B cell (primary cell): ENCODE measurements at regions of chr22 and their contacts with region 1.

Region 1: DNA sequence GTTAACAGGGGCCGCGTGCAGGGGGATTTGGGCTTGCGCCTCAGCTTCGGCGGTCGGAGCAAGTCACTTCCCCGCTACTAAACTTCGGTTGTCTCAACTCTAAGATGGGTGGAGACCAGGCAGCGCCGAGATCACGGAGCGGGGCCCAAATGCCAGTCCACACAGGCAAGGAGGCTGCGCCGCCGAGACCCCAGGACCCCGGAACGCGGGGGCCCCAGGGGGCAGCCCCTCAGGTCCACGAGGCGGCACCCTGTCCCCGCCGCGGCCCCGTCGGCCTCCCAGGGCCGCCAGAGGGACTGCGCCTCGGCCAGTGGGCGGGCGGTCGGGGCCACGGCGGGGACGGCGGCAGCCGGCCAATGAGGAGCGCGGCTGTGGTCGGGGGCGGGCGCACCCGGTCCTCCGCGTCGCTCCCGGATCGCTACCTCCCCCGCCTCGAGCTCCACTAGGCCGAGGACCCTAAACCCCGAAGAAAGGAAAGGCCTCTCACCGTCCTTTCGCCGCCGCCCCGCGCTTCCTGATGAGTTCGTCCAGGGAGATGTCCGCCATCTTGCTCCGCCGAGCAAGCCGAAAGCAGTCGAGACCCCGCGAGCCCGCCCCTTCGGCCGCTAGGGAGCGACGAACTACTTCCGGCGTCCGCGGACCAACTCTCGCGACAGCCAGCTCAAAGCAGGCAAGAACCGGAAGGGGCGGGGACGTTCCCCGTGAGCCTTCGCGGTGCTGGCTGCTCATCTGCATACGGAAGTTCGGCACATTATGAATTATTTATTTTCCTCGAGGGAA is at the start of gene POLDIP3:
- DNase-seq: peak; percentile 99
- ATAC-seq: peak; percentile 68
- H3K4me3 ChIP-seq: peak within 1 kb of the TSS; percentile 59 to 91 (median 74)
- H3K4me3 Mint-ChIP-seq: peak within 1 kb of the TSS; percentile 94
- H3K27ac ChIP-seq: peak within 1 kb of the TSS; percentile 98 to 100
- H3K27ac Mint-ChIP-seq: peak within 1 kb of the TSS; percentile 100
- H3K4me1 ChIP-seq: peaks cover 21 to 46% of the 10 kb centered on the region in 2 donors
- H3K4me1 Mint-ChIP-seq: peaks cover 56% of the 10 kb centered on the region
- H3K27me3 ChIP-seq: no peaks in the 10 kb centered on the region
- H3K27me3 Mint-ChIP-seq: no peaks in the 10 kb centered on the region
- CTCF ChIP-seq: no peak
- total RNA-seq, gene POLDIP3: 84.0 and 86.5 TPM in 2 replicates

Region 2: DNA sequence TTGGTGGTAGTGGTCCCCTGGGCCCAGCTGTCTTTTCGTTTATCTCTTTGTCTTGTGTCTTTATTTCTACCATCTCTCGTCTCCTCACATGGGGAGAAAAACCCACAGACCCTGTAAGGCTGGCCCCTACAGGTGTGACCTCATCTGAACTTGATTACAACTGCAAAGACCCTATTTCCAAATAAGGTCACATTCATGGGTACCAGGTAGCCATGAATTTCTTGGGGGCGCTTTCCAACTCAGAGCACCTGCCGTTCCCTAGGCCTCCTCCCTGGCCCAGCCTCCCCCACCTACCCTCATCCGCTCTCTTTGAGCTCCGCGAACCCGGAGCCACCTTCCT is 80.9 kb before region 1 on chr22:
- CTCF ChIA-PET with region 1: interaction called, 8 read pairs
- POLR2A ChIA-PET with region 1: interaction called, 10 read pairs
- intact Hi-C with region 1: loop called (anchors 1 kb)
- DNase-seq: no peak
- ATAC-seq: no peak
- H3K4me3 ChIP-seq: peak overlapping the region in 4 of 5 experiments; percentile 37 to 54 (median 53)
- H3K4me3 Mint-ChIP-seq: peak overlapping the region; percentile 90
- H3K27ac ChIP-seq: peak overlapping the region; percentile 92 to 93
- H3K27ac Mint-ChIP-seq: peak overlapping the region; percentile 97
- H3K4me1 ChIP-seq: peaks cover 38 to 66% of the 10 kb centered on the region in 2 donors
- H3K4me1 Mint-ChIP-seq: peaks cover 67% of the 10 kb centered on the region
- H3K27me3 ChIP-seq: no peaks in the 10 kb centered on the region
- H3K27me3 Mint-ChIP-seq: no peaks in the 10 kb centered on the region
- CTCF ChIP-seq: no peak

Region 3: GRCh38 chr22:42581762-42582716 is 32.5 kb before region 1 on chr22:
- CTCF ChIA-PET with region 1: no interaction called
- POLR2A ChIA-PET with region 1: interaction called, 3 read pairs
- intact Hi-C with region 1: loop called (anchors 2 kb)
- DNase-seq: peak; percentile 87
- ATAC-seq: peak; percentile 91
- H3K4me3 ChIP-seq: peak overlapping the region in 4 of 5 experiments; percentile 58 to 78 (median 68)
- H3K4me3 Mint-ChIP-seq: peak overlapping the region; percentile 95
- H3K27ac ChIP-seq: peak overlapping the region; percentile 50 to 69
- H3K27ac Mint-ChIP-seq: peak overlapping the region; percentile 86
- H3K4me1 ChIP-seq: peaks cover 4 to 11% of the 10 kb centered on the region in 2 donors
- H3K4me1 Mint-ChIP-seq: peaks cover 12% of the 10 kb centered on the region
- H3K27me3 ChIP-seq: no peaks in the 10 kb centered on the region
- H3K27me3 Mint-ChIP-seq: no peaks in the 10 kb centered on the region
- CTCF ChIP-seq: no peak

Region 4: GRCh38 chr22:42655693-42656092 is 41.2 kb after region 1 on chr22:
- CTCF ChIA-PET with region 1: interaction called, 6 read pairs
- POLR2A ChIA-PET with region 1: interaction called, 16 read pairs
- intact Hi-C with region 1: no loop called
- DNase-seq: peak; percentile 92
- ATAC-seq: peak; percentile 95
- H3K4me3 ChIP-seq: peak overlapping the region in 1 of 5 experiments; percentile 23
- H3K4me3 Mint-ChIP-seq: peak overlapping the region; percentile 80
- H3K27ac ChIP-seq: peak overlapping the region; percentile 61 to 91
- H3K27ac Mint-ChIP-seq: peak overlapping the region; percentile 94
- H3K4me1 ChIP-seq: peaks cover 35 to 48% of the 10 kb centered on the region in 2 donors
- H3K4me1 Mint-ChIP-seq: peaks cover 36% of the 10 kb centered on the region
- H3K27me3 ChIP-seq: no peaks in the 10 kb centered on the region
- H3K27me3 Mint-ChIP-seq: no peaks in the 10 kb centered on the region
- CTCF ChIP-seq: no peak

Region 5: GRCh38 chr22:42769574-42770447 is 155.3 kb after region 1 on chr22:
- CTCF ChIA-PET with region 1: no interaction called
- POLR2A ChIA-PET with region 1: interaction called, 3 read pairs
- intact Hi-C with region 1: loop called (anchors 1 kb)
- DNase-seq: peak; percentile 75
- ATAC-seq: peak; percentile 91
- H3K4me3 ChIP-seq: peak overlapping the region in 4 of 5 experiments; percentile 21 to 47 (median 30)
- H3K4me3 Mint-ChIP-seq: peak overlapping the region; percentile 83
- H3K27ac ChIP-seq: no peak overlapping the region
- H3K27ac Mint-ChIP-seq: peak overlapping the region; percentile 80
- H3K4me1 ChIP-seq: peaks cover 37 to 57% of the 10 kb centered on the region in 2 donors
- H3K4me1 Mint-ChIP-seq: peaks cover 64% of the 10 kb centered on the region
- H3K27me3 ChIP-seq: no peaks in the 10 kb centered on the region
- H3K27me3 Mint-ChIP-seq: no peaks in the 10 kb centered on the region
- CTCF ChIP-seq: no peak

Region 6: GRCh38 chr22:42829302-42829701 is 214.8 kb after region 1 on chr22:
- CTCF ChIA-PET with region 1: no interaction called
- POLR2A ChIA-PET with region 1: no interaction called
- intact Hi-C with region 1: no loop called
- DNase-seq: no peak
- ATAC-seq: no peak
- H3K4me3 ChIP-seq: no peak overlapping the region
- H3K4me3 Mint-ChIP-seq: no peak overlapping the region
- H3K27ac ChIP-seq: no peak overlapping the region
- H3K27ac Mint-ChIP-seq: no peak overlapping the region
- H3K4me1 ChIP-seq: no peaks in the 10 kb centered on the region
- H3K4me1 Mint-ChIP-seq: no peaks in the 10 kb centered on the region
- H3K27me3 ChIP-seq: no peaks in the 10 kb centered on the region
- H3K27me3 Mint-ChIP-seq: no peaks in the 10 kb centered on the region
- CTCF ChIP-seq: no peak

Region 7: DNA sequence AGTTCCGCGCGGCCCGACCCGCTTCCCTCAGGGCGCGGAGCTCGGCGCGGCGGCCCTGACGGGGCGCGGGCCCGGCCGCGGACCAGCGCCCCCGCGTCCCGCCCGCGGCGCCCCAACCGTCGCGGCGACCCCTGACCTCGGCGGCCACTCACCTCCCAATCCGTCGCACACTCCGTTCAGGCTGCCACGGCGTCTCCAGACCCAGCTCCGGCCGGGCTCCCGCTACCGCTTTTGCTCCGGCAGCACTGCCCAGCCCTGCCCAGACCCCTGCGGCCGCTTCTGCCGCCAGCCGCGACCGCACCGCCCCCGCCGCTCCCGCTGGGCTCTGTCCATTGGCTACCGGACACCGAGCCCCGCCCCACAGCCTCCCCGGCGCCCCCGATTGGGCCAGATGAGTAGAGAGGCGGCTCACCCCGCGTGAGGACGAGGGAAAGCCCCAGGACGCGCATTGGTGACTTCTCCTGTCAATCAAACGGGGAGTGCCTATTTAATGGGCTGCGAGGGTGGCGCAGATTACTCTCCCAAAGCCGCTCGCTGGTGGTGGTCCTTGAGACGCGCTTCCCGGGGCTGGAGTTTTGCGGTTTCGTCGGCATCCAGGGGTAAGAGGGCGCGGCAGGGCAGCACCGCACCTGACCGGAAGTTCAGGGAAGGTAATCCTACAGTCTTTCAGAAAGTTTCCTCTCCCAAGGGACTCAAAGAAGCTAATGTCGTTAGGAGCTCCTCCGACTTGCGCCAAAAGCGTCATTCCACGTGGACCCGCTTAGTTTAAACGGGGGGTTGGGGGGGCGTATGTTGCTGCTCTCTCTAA is 400.6 kb after region 1 on chr22 and contains the start of gene PACSIN2:
- CTCF ChIA-PET with region 1: no interaction called
- POLR2A ChIA-PET with region 1: interaction called, 4 read pairs
- intact Hi-C with region 1: loop called (anchors 2 kb)
- DNase-seq: peak; percentile 98
- ATAC-seq: peak; percentile 98
- H3K4me3 ChIP-seq: peak within 1 kb of the TSS; percentile 73 to 96 (median 77)
- H3K4me3 Mint-ChIP-seq: peak within 1 kb of the TSS; percentile 98
- H3K27ac ChIP-seq: peak within 1 kb of the TSS; percentile 66 to 80
- H3K27ac Mint-ChIP-seq: peak within 1 kb of the TSS; percentile 98
- H3K4me1 ChIP-seq: peaks cover 13 to 19% of the 10 kb centered on the region in 2 donors
- H3K4me1 Mint-ChIP-seq: peaks cover 32% of the 10 kb centered on the region
- H3K27me3 ChIP-seq: no peaks in the 10 kb centered on the region
- H3K27me3 Mint-ChIP-seq: no peaks in the 10 kb centered on the region
- CTCF ChIP-seq: no peak
- total RNA-seq, gene PACSIN2: 59.3 and 60.3 TPM in 2 replicates